IMR-90 (cell line): ENCODE measurements at regions of chr17 and their contacts with region 1.

Region 1: GRCh38 chr17:42016925-42017796 is at the start of gene DNAJC7:
- DNase-seq: peak; percentile 89
- ATAC-seq: peak; percentile 91
- H3K4me3 ChIP-seq: peak within 1 kb of the TSS; percentile 65
- H3K27ac ChIP-seq: peak within 1 kb of the TSS; percentile 94
- H3K4me1 ChIP-seq: peaks cover 3% of the 10 kb centered on the region; the same call in 1 of the 2 replicates
- H3K27me3 ChIP-seq: no peaks in the 10 kb centered on the region
- CTCF ChIP-seq: no peak
- POLR2A ChIP-seq: peak; percentile 88
- RAD21 ChIP-seq: no peak
- total RNA-seq, gene DNAJC7: 71.7 and 76.9 TPM in 2 replicates

Region 2: GRCh38 chr17:41918314-41919164 is 98.6 kb before region 1 on chr17 and contains the start of gene ACLY:
- CTCF ChIA-PET with region 1: no interaction called
- POLR2A ChIA-PET with region 1: no interaction called
- dilution Hi-C with region 1: no loop called
- in situ Hi-C with region 1: no loop called
- intact Hi-C with region 1: no loop called
- DNase-seq: peak; percentile 95
- ATAC-seq: peak; percentile 96
- H3K4me3 ChIP-seq: peak within 1 kb of the TSS; percentile 72
- H3K27ac ChIP-seq: peak within 1 kb of the TSS; percentile 73
- H3K4me1 ChIP-seq: peaks cover 27% of the 10 kb centered on the region
- H3K27me3 ChIP-seq: no peaks in the 10 kb centered on the region
- CTCF ChIP-seq: no peak
- POLR2A ChIP-seq: peak; percentile 96
- RAD21 ChIP-seq: no peak
- total RNA-seq, gene ACLY: 228 and 230 TPM in 2 replicates

Region 3: DNA sequence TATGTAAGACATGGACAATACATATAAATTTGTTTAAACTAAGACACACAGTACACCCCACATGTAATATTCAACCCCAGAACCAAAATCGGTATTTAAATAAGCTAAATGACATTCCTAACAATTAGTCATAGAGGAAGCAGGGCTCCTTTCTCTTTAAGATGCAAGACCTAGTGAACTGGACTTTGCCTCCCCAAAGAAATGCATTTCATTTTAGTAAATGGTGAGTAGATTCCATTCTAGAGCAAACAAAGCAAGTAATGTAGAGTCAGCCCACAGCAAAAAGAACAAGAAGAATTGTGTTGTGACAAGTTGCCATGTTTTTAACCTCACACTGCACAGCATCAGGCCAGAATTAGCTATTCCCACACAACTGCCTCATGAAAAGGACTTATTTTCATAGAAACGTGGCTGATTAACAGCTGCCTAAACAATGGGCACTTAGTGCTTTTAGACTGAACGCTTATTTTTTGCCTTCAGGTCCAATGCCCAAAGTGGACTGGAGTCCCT is 14.3 kb before region 1 on chr17:
- CTCF ChIA-PET with region 1: interaction called, 3 read pairs
- POLR2A ChIA-PET with region 1: interaction called, 6 read pairs
- dilution Hi-C with region 1: no loop called
- in situ Hi-C with region 1: no loop called
- intact Hi-C with region 1: loop called (anchors 2 kb)
- DNase-seq: peak; percentile 56
- ATAC-seq: peak; percentile 86
- H3K4me3 ChIP-seq: no peak overlapping the region
- H3K27ac ChIP-seq: peak overlapping the region; percentile 30; the same call in 1 of the 2 replicates
- H3K4me1 ChIP-seq: peaks cover 14% of the 10 kb centered on the region
- H3K27me3 ChIP-seq: no peaks in the 10 kb centered on the region
- CTCF ChIP-seq: no peak
- POLR2A ChIP-seq: no peak
- RAD21 ChIP-seq: no peak